ENCODE measurements at regions of chr1 and their contacts with region 1.

Region 1: GRCh38 chr1:200558866-200559459 is 61.6 kb downstream of the KIF14 start:
- H3K4me3 Mint-ChIP-seq: no peak overlapping the region
- H3K27ac Mint-ChIP-seq: no peak overlapping the region
- H3K4me1 Mint-ChIP-seq: no peaks in the 10 kb centered on the region
- H3K27me3 Mint-ChIP-seq: no peaks in the 10 kb centered on the region

Region 2: DNA sequence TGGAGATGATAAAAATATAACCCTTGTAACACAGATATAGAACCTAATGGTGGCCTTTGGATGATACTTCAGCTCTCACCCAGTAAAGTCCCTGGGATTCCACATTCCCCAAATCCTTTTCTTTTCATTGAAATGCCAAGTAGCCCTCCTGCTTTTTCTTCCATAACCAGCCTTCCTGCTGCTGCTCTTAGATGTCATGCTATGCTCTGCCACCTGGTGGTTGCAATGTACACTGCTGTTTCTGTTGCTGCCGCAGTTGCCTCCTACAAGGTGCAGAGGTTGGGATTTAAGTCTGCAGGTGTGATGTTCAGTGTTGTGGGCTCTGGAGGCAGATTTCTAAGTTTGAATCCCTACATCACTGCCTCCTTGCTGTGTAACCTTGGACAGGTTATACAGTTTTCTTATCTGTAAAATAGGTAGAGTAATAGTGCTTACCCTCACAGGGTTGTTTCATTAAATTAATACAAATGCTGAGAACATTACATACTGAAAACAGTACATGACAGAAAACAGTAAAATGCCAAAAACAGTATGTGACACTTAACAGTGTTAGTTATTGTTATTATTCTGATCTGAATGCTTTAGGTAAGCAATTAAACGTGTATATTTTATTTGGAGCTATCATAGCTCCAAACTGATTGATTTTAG is 244.0 kb after region 1 on chr1:
- intact Hi-C with region 1: loop called (anchors 2 kb)
- H3K4me3 Mint-ChIP-seq: no peak overlapping the region
- H3K27ac Mint-ChIP-seq: no peak overlapping the region
- H3K4me1 Mint-ChIP-seq: peaks cover 18% of the 10 kb centered on the region
- H3K27me3 Mint-ChIP-seq: no peaks in the 10 kb centered on the region

Region 3: DNA sequence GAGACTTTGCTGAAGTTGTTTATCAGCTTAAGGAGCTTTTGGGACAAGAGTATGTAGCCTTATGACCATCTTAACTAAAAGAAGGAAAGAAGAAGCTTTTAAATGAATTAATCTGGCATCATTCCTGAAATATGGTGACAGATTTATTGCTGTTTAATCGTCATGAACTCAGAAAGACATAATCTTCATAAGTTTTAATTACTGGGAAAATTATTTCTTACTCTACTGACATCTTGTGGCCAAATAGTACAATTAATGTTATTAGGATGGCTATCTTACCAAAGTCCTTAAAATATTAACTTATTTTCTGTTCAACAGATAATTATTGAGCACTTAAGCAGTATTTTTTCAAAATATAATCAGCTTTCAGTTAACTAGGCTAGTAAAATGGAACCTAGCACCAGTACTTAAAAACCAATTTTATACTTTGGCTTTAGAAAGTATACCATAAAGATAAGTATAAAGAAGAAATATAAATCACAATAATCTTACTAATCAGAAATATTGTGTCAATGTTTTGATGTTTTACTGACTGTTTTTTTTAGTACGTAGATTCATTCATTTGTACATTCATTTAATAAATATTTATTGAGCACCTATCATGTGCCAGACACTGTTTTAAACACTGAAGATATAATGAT is 279.1 kb after region 1 on chr1:
- intact Hi-C with region 1: loop called (anchors 1 kb)
- H3K4me3 Mint-ChIP-seq: no peak overlapping the region
- H3K27ac Mint-ChIP-seq: no peak overlapping the region
- H3K4me1 Mint-ChIP-seq: no peaks in the 10 kb centered on the region
- H3K27me3 Mint-ChIP-seq: no peaks in the 10 kb centered on the region

Measured in dendritic cell treated with granulocyte-macrophage colony-stimulating factor and Interleukin-4, amounts not matched to agents 40 ng/mL and 50 ng/mL, for 4 days (primary cell).